Mammary epithelial cell (primary cell): ENCODE measurements at regions of chr10 and their contacts with region 1.

Region 1: GRCh38 chr10:14325325-14325955 is 5.3 kb downstream of the FRMD4A start:
- DNase-seq: peak; percentile 5
- H3K4me3 ChIP-seq: no peak overlapping the region
- H3K27ac ChIP-seq: no peak overlapping the region
- H3K4me1 ChIP-seq: peaks cover 12% of the 10 kb centered on the region
- H3K27me3 ChIP-seq: no peaks in the 10 kb centered on the region
- CTCF ChIP-seq: peak; percentile 42 to 54

Region 2: DNA sequence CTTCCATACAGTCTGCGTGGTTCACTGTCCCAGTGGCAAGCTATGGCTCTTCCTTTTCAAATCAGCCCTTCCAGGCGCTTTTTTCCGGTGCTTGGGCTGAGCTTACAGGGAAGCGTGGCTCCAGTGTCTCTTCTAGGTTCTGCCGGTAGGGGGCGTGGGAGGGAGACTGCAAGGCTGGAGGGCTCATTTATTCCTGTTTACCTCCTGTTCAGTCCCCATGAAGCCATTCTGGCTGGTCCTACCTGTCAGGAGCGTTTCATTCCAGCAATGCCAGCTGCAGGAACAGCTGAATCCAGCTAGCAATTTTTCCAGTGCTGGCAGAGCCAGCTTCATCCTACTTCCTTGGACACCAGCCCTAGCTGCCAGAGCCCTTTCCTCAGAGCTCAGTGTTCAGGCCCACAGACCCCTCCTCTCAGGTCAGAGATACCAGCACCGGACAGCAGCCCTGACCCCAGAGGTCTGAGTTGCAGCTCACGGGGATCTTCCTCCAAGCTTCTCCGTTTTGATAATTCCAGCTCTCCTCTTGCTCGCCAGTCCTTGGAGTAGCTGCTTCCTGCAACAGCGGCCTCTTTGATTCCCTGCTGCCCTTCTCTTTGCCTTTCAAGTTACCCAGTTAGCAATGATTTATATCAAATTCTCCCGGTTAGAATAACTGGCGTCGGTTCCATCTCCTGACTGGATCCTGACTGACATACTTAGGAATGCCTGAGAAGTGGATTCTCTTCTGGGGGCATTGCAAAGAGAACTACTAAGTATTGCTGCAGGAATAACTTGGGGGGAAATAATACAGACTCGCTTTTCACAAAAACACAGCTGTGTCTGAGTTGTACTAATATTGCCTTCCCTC is 124.5 kb before region 1 on chr10:
- CTCF ChIA-PET with region 1: no interaction called
- dilution Hi-C with region 1: no loop called
- in situ Hi-C with region 1: no loop called
- intact Hi-C with region 1: loop called (anchors 10 kb)
- DNase-seq: no peak
- H3K4me3 ChIP-seq: no peak overlapping the region
- H3K27ac ChIP-seq: no peak overlapping the region
- H3K4me1 ChIP-seq: no peaks in the 10 kb centered on the region
- H3K27me3 ChIP-seq: peaks cover 2% of the 10 kb centered on the region
- CTCF ChIP-seq: peak in 1 of 2 donors; percentile 33

Region 3: DNA sequence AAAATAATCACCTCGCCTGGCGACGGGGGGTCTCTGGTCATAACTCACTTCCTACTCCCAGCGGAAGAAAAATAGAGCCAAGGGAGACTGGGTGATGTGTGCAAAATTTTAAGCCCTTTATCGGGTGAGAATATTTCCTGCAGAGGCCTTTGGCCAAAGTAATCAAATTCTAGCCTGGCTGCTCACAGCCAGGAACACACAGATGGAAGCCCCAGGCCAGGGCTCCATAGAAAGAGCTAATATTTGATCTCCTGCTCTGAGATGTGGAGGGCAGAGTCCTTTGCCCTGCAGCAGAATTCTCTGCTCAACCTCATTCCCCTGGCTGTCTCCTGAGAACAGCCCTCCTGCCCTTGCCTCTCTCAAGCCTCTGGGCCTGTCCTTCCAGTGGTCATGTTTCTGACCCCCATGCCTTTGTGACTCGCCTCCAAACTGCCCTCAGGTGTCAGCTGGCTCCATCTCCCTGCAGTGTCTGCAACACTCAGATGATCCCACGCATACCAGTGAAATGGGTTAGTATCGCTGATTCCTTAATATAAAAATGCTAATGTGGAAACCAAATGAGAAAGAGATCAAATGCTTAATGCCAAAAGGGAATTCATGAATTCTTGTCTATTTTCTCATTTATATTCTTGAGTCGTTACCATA is 29.3 kb before region 1 on chr10:
- CTCF ChIA-PET with region 1: no interaction called
- dilution Hi-C with region 1: loop called (anchors 5 kb)
- in situ Hi-C with region 1: no loop called
- intact Hi-C with region 1: no loop called
- DNase-seq: no peak
- H3K4me3 ChIP-seq: no peak overlapping the region
- H3K27ac ChIP-seq: no peak overlapping the region
- H3K4me1 ChIP-seq: no peaks in the 10 kb centered on the region
- H3K27me3 ChIP-seq: peaks cover 1% of the 10 kb centered on the region
- CTCF ChIP-seq: no peak